ENCODE measurements at regions of chr9 and their contacts with region 1.

Region 1: DNA sequence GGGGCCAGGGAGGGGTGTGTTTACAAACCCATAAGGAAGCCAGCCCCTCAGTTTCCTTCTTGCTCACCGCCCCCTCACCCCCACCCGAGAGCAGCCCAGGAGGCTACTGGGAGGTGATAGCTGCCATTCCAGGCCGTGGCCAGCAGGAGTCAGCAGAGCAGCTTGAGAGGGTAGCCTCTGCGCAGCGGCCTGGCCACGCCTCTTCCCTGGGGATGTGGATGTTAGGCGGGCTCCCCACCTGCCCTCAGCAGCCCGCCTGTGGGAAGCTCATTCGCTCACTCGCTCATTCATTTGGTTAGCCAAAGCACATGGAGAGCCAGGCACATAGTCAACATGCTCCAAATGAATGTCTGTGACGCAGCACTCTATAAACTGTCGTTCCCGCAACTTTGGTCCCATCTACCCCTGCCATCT is 6.1 kb upstream of the DPM2 start:
- DNase-seq: peak; percentile 78
- H3K4me3 ChIP-seq: no peak overlapping the region
- H3K27ac ChIP-seq: no peak overlapping the region
- H3K4me1 ChIP-seq: no peaks in the 10 kb centered on the region
- H3K27me3 ChIP-seq: no peaks in the 10 kb centered on the region
- CTCF ChIP-seq: peak; percentile 61 to 98 (median 92)
- POLR2A ChIP-seq: no peak

Region 2: DNA sequence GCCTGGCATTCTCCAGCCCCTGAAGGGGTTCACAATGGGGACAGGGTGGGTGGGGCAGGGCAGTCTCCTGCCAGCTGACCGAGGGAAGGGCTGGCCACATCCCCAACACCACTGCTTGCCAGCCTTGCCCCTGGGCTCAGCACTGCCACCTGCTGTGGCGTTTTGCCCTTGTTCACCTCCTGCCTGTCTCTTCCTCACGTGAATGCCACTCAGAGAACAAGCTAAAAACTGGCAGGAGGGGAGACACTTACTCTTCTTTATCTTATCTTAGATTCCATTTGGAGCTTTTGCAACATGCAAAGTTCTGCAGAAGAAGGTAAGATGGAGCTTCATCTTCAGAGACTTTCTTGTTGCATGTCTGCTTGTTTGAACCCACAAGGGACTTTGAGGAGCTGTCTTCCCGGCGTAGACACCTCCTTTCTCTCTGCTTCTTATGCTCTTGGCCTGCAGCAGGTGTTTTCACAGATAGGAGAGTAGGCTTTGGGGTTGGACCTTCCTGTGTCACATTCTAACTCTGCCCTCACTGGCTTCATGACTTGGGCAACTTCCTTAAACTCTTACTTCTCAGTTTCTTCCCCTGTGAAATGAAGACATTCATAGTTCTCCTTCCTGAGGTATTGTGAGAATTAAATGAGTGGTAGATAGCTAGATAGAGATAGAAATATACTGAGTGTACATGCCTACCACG is 488.3 kb before region 1 on chr9:
- intact Hi-C with region 1: no loop called
- DNase-seq: no peak
- H3K4me3 ChIP-seq: no peak overlapping the region
- H3K27ac ChIP-seq: no peak overlapping the region
- H3K4me1 ChIP-seq: peaks cover 7% of the 10 kb centered on the region
- H3K27me3 ChIP-seq: no peaks in the 10 kb centered on the region
- CTCF ChIP-seq: peak in 2 of 4 experiments; percentile 21 to 28
- POLR2A ChIP-seq: no peak

Region 3: GRCh38 chr9:127980706-127981558 is 37.2 kb after region 1 on chr9 and contains the start of gene EEIG1:
- intact Hi-C with region 1: loop called (anchors 5 kb)
- DNase-seq: peak; percentile 95
- H3K4me3 ChIP-seq: peak within 1 kb of the TSS; percentile 85 to 92
- H3K27ac ChIP-seq: peak within 1 kb of the TSS; percentile 90 to 92
- H3K4me1 ChIP-seq: peaks cover 12% of the 10 kb centered on the region
- H3K27me3 ChIP-seq: no peaks in the 10 kb centered on the region
- CTCF ChIP-seq: no peak
- POLR2A ChIP-seq: peak; percentile 80
- total RNA-seq, gene EEIG1: 23.4 to 84.6 TPM

Region 4: DNA sequence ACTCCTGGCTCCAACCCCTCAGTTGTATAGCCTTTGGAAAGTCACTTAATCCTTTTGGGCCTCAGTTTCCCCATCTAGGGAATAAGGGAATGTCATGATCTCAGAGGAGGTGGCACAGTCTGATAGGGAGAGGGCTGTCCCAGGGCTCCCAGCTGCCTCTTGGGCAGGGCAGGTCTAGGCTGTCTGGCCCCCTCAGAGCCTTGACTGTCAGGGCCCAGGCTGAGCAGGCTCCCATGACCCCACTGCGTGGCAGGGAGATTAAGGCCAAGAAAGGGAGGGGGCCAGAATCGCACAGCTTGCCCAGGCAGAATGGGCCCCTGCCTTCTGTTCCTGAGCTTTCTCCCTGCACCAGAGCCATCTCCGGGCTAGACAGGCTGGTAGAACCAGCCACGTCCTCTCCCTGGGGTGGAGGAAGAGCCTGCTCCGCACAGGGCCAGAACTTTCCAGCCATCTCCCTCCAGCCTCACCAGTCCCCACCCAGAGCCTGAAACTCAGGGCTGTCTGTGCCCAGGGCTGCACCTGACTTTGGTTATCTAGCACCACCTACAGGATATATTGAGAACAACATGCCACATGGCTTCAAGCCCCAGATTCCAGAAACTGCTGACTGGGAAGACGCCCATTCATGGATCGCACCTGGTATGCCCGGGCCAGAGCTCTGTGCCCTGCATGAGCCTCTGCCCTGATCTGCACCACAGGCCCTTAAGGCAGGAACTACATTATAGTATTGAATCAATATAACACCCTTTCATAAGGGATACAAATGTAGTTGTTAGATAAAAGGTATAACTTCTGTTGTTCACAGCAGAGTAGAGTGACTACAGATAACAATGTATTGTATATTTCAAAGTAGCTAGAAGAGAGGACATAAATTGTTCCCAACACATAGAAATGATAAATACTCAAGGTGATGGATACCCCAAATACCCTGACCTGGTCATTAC is 91.4 kb after region 1 on chr9:
- intact Hi-C with region 1: loop called (anchors 1 kb)
- DNase-seq: peak; percentile 84
- H3K4me3 ChIP-seq: no peak overlapping the region
- H3K27ac ChIP-seq: no peak overlapping the region
- H3K4me1 ChIP-seq: no peaks in the 10 kb centered on the region
- H3K27me3 ChIP-seq: no peaks in the 10 kb centered on the region
- CTCF ChIP-seq: peak; percentile 82 to 98 (median 95)
- POLR2A ChIP-seq: peak; percentile 16

Region 5: DNA sequence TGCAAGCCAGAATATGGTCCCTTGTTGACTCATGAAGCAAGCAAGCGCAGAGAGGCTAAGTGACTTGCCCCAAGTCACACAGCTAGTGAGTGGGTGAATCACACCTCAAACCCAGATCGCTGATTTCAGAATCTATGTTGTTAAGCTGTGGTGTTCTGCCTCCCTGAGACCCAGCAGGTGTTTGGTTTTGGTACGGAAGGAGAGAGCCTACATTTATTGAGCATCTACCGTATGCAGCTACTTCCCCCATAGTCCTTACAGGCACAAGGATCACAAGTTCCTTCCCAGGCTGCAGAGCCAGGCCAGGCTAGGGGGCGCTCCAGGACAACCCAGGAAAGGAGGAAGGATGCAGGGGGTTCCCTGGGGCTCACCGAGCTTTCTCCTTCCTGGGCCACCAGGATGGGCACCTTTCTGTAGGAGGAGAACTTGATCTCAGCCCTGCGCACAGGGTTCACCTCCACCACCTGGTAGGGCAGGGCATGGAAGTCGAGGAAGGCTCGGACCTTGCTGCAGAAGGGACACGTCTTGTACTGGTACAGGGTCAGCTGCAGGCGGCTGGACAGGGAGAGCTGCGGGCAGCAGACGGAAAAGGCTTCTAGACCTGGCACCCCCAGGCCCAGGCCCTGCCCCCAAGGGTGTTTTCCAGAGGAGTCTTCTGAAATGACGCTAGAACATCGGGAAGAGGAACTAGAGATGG is 181.3 kb after region 1 on chr9:
- intact Hi-C with region 1: loop called (anchors 5 kb)
- DNase-seq: peak; percentile 54
- H3K4me3 ChIP-seq: no peak overlapping the region
- H3K27ac ChIP-seq: no peak overlapping the region
- H3K4me1 ChIP-seq: peaks cover 10% of the 10 kb centered on the region
- H3K27me3 ChIP-seq: no peaks in the 10 kb centered on the region
- CTCF ChIP-seq: peak in 2 of 4 experiments; percentile 40 to 70
- POLR2A ChIP-seq: no peak

Measured in prostate gland (tissue), 2 donors.